ENCODE measurements at regions of chr6 and their contacts with region 1.

Region 1: DNA sequence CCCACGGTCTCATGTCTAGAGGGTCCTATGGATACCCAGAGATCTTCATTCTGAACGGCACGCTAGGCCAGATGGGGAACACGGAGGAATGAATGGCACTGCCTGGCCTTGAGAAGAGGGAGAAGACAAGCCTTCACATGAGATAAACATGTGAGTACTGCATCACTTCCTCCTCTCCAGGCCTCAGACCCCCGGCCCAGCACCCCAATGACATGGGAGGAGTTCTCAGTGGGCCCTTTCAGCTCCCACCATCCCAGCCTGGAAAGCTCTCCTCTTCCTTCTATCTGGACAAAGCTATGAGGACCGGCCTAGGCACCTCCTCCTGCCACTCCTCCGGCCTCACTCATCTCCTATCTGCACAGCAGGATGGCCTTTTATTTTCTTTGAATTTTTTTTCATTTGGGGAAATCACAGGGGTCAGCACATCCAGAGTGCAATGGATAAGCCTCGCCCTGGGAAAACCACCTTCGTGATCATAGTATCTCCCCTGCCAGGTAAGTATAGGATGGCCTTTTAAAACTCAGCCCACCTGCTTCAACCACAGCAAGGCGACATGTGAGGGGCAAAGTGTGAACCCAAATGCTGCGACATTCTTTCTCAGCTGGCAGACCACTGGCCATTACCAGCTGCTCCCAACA is 39.2 kb upstream of the CDKN1A start:
- DNase-seq: no peak
- ATAC-seq: no peak
- H3K4me3 ChIP-seq: no peak overlapping the region
- H3K27ac ChIP-seq: no peak overlapping the region
- H3K4me1 ChIP-seq: peaks cover 0 to 22% (median 11%) of the 10 kb centered on the region in 12 donors
- H3K27me3 ChIP-seq: no peaks in the 10 kb centered on the region
- CTCF ChIP-seq: no peak
- POLR2A ChIP-seq: no peak

Region 2: GRCh38 chr6:36360241-36361054 is 278.8 kb before region 1 on chr6:
- intact Hi-C with region 1: no loop called
- DNase-seq: peak; percentile 74 to 87 (median 77)
- ATAC-seq: peak; percentile 83 to 92 (median 91)
- H3K4me3 ChIP-seq: no peak overlapping the region
- H3K27ac ChIP-seq: peak overlapping the region in 3 of 12 donors; percentile 15 to 39 (median 33)
- H3K4me1 ChIP-seq: peaks cover 0 to 44% (median 13%) of the 10 kb centered on the region in 12 donors
- H3K27me3 ChIP-seq: peaks cover 0 to 15% (median 0%) of the 10 kb centered on the region in 9 donors
- CTCF ChIP-seq: peak; percentile 74 to 86 (median 84)
- POLR2A ChIP-seq: no peak

Region 3: GRCh38 chr6:36671687-36672380 is 32.5 kb after region 1 on chr6:
- intact Hi-C with region 1: loop called in 2 of 10 experiments (anchors 5 kb)
- DNase-seq: no peak
- ATAC-seq: no peak
- H3K4me3 ChIP-seq: no peak overlapping the region
- H3K27ac ChIP-seq: no peak overlapping the region
- H3K4me1 ChIP-seq: peaks cover 0 to 32% (median 10%) of the 10 kb centered on the region in 12 donors
- H3K27me3 ChIP-seq: no peaks in the 10 kb centered on the region
- CTCF ChIP-seq: no peak
- POLR2A ChIP-seq: no peak

Region 4: DNA sequence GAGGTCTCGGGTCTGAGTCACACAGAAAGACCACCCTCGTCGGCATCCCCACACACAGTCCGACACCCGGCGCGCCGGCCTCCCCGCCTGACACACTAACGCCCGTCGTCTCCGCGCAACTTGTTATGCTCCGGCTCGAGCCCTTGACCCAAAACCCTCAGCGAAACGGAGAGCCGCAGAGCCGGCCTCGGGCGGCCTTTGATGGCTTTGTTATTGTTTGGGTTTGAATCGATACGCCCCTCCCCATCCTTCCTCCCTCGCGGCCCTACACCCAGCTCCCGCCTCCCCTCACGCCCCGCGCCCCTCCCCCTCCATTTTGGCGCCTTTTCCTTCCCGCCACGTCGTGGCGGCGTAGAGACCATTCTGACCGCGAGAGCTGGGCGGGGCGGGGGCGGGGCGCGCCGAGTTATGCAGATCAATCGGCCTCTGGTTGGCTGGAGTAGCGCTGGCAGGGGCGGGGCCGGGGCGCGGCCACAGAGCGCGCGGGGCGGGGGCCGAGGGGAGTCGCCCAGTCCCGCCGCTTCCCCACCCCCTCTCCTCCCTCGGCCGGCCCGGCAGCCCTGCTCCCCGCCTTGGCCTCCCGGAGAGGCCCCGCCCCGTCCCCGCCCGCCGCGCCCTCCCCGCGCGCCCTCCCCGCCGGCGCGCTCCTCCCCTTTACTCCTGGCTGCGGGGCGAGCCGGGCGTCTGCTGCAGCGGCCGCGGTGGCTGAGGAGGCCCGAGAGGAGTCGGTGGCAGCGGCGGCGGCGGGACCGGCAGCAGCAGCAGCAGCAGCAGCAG is 530.4 kb after region 1 on chr6 and contains the start of gene PIM1:
- intact Hi-C with region 1: no loop called
- DNase-seq: peak; percentile 99 to 100 (median 100)
- ATAC-seq: peak; percentile 90 to 96 (median 92)
- H3K4me3 ChIP-seq: peak within 1 kb of the TSS; percentile 61 to 100 (median 90)
- H3K27ac ChIP-seq: peak within 1 kb of the TSS; percentile 88 to 97 (median 93)
- H3K4me1 ChIP-seq: peaks cover 0 to 42% (median 17%) of the 10 kb centered on the region in 12 donors
- H3K27me3 ChIP-seq: no peaks in the 10 kb centered on the region
- CTCF ChIP-seq: peak in 1 of 12 donors; percentile 25
- POLR2A ChIP-seq: peak; percentile 68 to 95
- total RNA-seq, gene PIM1: 7.0 to 81.8 (median 16.0) TPM